Caco-2 (cell line): ENCODE measurements at regions of chr15 and their contacts with region 1.

Region 1: GRCh38 chr15:75947092-75947491 is 43.4 kb downstream of the FBXO22 start:
- DNase-seq: no peak
- H3K4me3 ChIP-seq: no peak overlapping the region
- H3K4me3 Mint-ChIP-seq: no peak overlapping the region
- H3K27ac Mint-ChIP-seq: no peak overlapping the region
- H3K4me1 ChIP-seq: no peaks in the 10 kb centered on the region
- H3K4me1 Mint-ChIP-seq: no peaks in the 10 kb centered on the region
- H3K27me3 ChIP-seq: no peaks in the 10 kb centered on the region
- H3K27me3 Mint-ChIP-seq: peaks cover 5% of the 10 kb centered on the region
- CTCF ChIP-seq: no peak

Region 2: DNA sequence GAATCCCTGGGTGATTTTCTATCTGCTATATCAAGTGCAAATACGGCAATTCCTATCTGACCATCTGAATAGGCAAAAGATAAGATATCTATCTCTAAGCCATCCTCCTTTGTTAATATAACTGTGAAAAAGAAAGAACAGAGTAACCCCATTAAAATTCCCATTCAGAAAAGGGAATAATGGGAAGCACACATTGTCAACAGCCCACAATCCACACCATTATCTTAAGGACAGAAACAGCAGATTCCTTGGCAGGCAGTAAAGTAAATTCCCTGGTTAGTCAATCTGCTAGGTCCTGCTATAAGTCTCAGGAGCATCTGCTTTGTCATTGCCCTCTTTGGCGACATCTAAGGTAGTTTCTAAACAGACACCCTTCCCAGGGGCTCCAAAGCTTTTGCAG is 87.0 kb after region 1 on chr15:
- CTCF ChIA-PET with region 1: no interaction called
- POLR2A ChIA-PET with region 1: no interaction called
- intact Hi-C with region 1: loop called (anchors 5 kb)
- DNase-seq: peak in 1 of 2 experiments; percentile 15
- H3K4me3 ChIP-seq: no peak overlapping the region
- H3K4me3 Mint-ChIP-seq: peak overlapping the region; percentile 18
- H3K27ac Mint-ChIP-seq: no peak overlapping the region
- H3K4me1 ChIP-seq: peaks cover 14% of the 10 kb centered on the region
- H3K4me1 Mint-ChIP-seq: peaks cover 9% of the 10 kb centered on the region
- H3K27me3 ChIP-seq: no peaks in the 10 kb centered on the region
- H3K27me3 Mint-ChIP-seq: no peaks in the 10 kb centered on the region
- CTCF ChIP-seq: no peak